HepG2 (cell line): ENCODE measurements at regions of chr2 and their contacts with region 1.

Region 1: DNA sequence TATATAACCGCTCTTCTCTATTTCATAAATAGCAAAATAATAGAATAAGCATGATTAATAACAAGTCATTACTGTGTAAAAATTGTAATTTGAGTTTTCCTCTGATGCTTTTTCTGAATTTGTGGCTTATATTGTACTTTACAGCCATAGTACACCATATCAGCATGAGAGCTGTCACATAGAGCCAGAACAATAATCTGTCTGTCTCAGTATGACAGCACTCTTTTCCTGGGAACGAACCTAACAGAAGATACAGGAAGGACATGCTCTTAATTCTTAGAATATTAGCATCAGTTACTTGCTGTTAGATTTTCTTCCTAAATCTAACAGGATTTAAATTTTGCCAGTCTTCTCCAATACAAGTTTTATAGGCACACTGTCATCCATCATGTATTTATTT is 21.3 kb upstream of the NRXN1 start:
- DNase-seq: no peak
- ATAC-seq: no peak
- H3K4me3 ChIP-seq: no peak overlapping the region
- H3K27ac ChIP-seq: no peak overlapping the region
- H3K4me1 ChIP-seq: no peaks in the 10 kb centered on the region
- H3K27me3 ChIP-seq: no peaks in the 10 kb centered on the region
- CTCF ChIP-seq: no peak
- EP300 ChIP-seq: no peak
- POLR2A ChIP-seq: no peak
- RAD21 ChIP-seq: no peak

Region 2: DNA sequence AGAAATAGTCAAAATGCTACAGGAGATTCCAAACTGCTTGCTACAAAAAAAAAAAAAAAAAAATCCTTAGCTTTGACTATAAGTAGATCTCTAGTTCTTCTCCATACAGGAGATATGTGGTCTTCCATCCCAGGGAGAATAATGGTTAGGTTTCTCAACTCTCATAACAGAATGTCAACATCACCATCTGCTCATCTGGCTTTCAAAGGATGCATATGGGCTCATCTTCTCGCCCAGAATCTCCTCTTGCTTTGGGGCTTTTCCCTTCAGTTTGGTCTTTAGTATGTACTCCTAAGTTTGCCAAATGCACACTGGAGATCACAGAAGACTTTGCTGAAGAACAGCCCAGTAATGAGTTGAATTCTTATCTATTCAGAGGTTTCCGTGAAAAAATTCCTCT is 261.9 kb before region 1 on chr2:
- CTCF ChIA-PET with region 1: no interaction called
- POLR2A ChIA-PET with region 1: no interaction called
- in situ Hi-C with region 1: no loop called
- intact Hi-C with region 1: loop called (anchors 10 kb)
- DNase-seq: no peak
- ATAC-seq: no peak
- H3K4me3 ChIP-seq: no peak overlapping the region
- H3K27ac ChIP-seq: no peak overlapping the region
- H3K4me1 ChIP-seq: no peaks in the 10 kb centered on the region
- H3K27me3 ChIP-seq: no peaks in the 10 kb centered on the region
- CTCF ChIP-seq: no peak
- EP300 ChIP-seq: no peak
- POLR2A ChIP-seq: no peak
- RAD21 ChIP-seq: no peak

Region 3: GRCh38 chr2:50953021-50953642 is 100.1 kb before region 1 on chr2:
- CTCF ChIA-PET with region 1: no interaction called
- POLR2A ChIA-PET with region 1: no interaction called
- in situ Hi-C with region 1: no loop called
- intact Hi-C with region 1: no loop called
- DNase-seq: peak; percentile 1
- ATAC-seq: no peak
- H3K4me3 ChIP-seq: no peak overlapping the region
- H3K27ac ChIP-seq: no peak overlapping the region
- H3K4me1 ChIP-seq: no peaks in the 10 kb centered on the region
- H3K27me3 ChIP-seq: no peaks in the 10 kb centered on the region
- CTCF ChIP-seq: no peak
- EP300 ChIP-seq: no peak
- POLR2A ChIP-seq: no peak
- RAD21 ChIP-seq: no peak

Region 4: DNA sequence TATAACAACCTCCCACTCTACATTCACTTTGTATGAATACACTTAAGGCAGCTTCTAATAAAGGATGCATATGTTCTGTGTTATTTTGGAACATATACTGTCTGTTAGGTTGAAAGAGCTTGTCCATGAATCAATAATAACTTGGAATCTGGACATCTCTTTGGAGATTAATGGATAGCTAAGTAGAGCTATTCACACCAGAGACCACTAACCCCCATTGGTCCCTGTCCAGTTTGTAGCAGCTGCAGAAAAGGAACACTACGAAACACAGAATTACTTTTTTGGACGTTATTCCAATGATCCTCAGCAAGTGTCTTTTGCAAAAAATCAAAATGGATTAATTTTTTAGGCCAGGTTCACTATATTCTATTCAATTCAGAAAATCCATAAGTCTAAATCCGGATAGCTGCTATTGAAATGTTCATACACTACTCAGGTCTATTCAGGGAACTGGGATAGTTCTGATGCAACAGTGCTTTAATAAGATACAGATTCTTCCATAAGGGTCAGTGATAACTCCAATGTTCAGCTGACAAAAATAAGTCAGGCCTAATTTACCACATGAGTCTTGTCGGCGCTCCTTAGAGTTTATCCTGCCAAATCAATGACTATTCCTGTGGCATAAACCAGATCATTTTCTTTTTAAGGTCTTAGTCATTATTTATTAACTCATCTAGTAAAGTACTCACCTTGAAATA is 65.4 kb before region 1 on chr2:
- CTCF ChIA-PET with region 1: no interaction called
- POLR2A ChIA-PET with region 1: no interaction called
- in situ Hi-C with region 1: no loop called
- intact Hi-C with region 1: no loop called
- DNase-seq: no peak
- ATAC-seq: no peak
- H3K4me3 ChIP-seq: no peak overlapping the region
- H3K27ac ChIP-seq: no peak overlapping the region
- H3K4me1 ChIP-seq: no peaks in the 10 kb centered on the region
- H3K27me3 ChIP-seq: no peaks in the 10 kb centered on the region; a peak in 1 of 5 replicates
- CTCF ChIP-seq: no peak
- EP300 ChIP-seq: no peak
- POLR2A ChIP-seq: no peak
- RAD21 ChIP-seq: no peak